ENCODE measurements at regions of chr5 and their contacts with region 1.

Region 1: GRCh38 chr5:149828161-149828884 is 98.2 kb downstream of the PPARGC1B start:
- DNase-seq: peak; percentile 91
- ATAC-seq: peak; percentile 73

Region 2: DNA sequence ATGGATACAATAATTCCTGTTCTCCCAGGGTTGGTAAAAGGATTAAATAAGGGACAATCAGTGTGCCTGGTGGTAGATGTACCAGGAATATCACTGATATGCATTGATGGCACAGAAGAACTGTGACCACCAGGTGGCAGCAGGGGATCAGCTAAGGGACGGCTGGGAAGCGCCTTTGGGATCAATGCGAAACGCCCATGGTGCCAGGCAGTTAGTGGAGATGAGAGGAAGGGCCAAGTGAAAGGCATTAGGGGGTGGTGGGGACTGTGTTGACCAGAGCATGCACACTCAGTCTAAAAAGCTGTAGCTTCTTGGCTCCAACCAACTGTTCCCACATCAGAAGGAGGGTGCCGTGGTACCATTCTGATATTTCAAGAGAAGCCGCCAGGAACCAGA is 191.5 kb before region 1 on chr5:
- intact Hi-C with region 1: loop called (anchors 5 kb)
- DNase-seq: no peak
- ATAC-seq: peak; percentile 74

Region 3: GRCh38 chr5:149667084-149667828 is 161.1 kb before region 1 on chr5:
- intact Hi-C with region 1: loop called (anchors 1 kb)
- DNase-seq: no peak
- ATAC-seq: peak; percentile 63

Region 4: GRCh38 chr5:149731639-149732323 is 96.5 kb before region 1 on chr5:
- intact Hi-C with region 1: loop called (anchors 10 kb)
- DNase-seq: peak; percentile 92
- ATAC-seq: peak; percentile 79